AG04450 (cell line): ENCODE measurements at regions of chr18 and their contacts with region 1.

Region 1: GRCh38 chr18:45212181-45213039 is 402.9 kb upstream of the SLC14A2 start:
- DNase-seq: peak; percentile 44
- H3K4me3 ChIP-seq: no peak overlapping the region
- H3K27ac ChIP-seq: no peak overlapping the region
- H3K27me3 ChIP-seq: no peaks in the 10 kb centered on the region
- CTCF ChIP-seq: peak; percentile 99

Region 2: DNA sequence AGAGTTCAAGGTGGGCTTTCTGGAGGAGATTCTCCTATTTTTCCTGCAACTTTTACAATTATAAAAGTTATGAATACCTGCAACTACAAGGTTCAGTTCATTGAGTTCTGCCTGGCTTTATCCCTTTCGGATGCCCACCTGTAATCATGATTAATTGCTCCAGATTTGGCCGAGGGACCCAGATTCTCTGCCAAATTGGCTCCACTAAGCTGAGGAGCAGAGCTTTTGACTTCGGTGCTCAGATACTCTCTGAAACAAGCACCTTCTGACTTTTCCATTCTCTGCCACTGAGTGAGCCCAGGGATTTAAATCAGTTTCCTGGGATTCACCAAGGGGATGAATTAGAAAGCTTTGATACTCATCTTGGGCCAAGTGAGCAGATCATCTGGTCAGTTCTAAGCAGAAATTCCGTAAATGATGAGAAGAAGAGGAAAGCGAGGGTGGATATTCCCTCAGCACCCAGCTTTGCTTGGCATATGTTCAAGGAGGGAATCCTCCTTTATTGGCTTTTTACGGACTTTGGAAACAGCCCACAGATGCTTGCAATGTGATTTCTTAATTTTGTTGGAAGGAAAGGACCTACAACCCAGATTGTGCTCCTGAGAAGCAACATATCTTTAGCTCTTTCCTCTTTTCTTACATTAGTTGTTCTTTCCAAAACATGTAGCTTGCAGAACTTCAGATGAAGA is 352.5 kb before region 1 on chr18:
- CTCF ChIA-PET with region 1: no interaction called
- POLR2A ChIA-PET with region 1: no interaction called
- DNase-seq: no peak
- H3K4me3 ChIP-seq: no peak overlapping the region
- H3K27ac ChIP-seq: no peak overlapping the region
- H3K27me3 ChIP-seq: no peaks in the 10 kb centered on the region
- CTCF ChIP-seq: no peak

Region 3: DNA sequence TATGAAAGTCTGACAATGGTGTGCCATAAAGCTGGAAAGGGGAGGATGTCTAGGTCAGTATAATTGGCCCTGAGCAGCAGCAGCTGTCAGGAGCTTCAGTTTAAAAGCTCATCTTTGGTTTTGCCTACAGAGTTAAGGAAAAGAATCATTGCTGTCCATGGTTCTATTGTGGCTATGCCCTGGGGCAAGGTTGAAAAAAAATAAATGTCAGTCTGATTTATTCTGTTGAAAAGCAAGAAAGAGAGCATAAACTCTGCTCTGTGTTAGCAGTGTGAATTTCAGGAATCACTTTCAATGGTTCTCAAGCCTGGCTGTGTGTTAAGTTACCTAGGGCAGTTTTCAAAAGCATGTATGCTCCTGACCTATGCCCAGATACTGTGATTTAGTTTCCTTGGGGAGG is 85.0 kb before region 1 on chr18:
- CTCF ChIA-PET with region 1: interaction called, 10 read pairs
- POLR2A ChIA-PET with region 1: no interaction called
- DNase-seq: no peak
- H3K4me3 ChIP-seq: no peak overlapping the region
- H3K27ac ChIP-seq: no peak overlapping the region
- H3K27me3 ChIP-seq: no peaks in the 10 kb centered on the region
- CTCF ChIP-seq: no peak

Region 4: DNA sequence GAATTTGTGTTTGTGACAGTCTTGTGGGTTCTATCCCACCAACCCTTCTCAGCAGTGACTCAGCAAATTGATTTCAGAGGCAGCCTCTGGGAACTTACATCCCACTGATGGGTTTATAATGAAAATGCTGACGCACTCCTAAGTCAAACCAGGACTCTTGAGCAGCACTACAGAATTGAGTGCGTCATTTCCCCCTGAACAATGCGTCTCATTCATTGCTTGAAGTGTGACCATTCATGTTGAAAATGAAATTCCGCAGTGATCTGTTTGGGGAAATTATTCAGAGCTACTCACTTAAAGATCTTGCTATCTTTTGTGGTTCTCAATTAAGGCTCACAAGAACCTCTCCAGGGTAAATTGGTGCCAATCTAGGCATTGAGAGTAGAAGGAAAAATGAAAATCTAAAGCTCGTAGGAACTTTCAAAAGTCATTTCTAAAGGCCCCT is 14.9 kb before region 1 on chr18:
- CTCF ChIA-PET with region 1: interaction called, 26 read pairs
- POLR2A ChIA-PET with region 1: no interaction called
- DNase-seq: peak; percentile 34
- H3K4me3 ChIP-seq: no peak overlapping the region
- H3K27ac ChIP-seq: no peak overlapping the region
- H3K27me3 ChIP-seq: no peaks in the 10 kb centered on the region
- CTCF ChIP-seq: no peak

Region 5: DNA sequence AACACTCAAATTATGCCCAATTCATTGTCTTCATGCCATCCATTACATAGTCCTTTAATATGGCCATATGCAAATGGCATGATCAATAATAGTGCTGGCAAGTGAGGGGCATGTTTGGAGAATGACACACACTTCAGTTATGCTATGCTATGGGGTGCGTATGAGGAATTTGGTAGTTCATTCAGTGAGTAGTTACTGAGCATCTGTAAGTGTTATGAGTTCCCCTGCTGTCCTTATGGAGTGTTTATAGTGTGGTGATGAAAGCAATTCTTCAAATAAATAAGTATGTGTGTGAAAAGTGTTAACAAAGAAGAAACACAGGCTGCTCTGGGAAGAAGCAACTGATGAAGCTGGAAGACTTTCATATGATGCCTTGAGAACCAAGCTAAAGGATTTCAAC is 19.2 kb after region 1 on chr18:
- CTCF ChIA-PET with region 1: interaction called, 12 read pairs
- POLR2A ChIA-PET with region 1: no interaction called
- DNase-seq: no peak
- H3K4me3 ChIP-seq: no peak overlapping the region
- H3K27ac ChIP-seq: no peak overlapping the region
- H3K27me3 ChIP-seq: no peaks in the 10 kb centered on the region
- CTCF ChIP-seq: no peak

Region 6: GRCh38 chr18:45248240-45248903 is 36.0 kb after region 1 on chr18:
- CTCF ChIA-PET with region 1: interaction called, 13 read pairs
- POLR2A ChIA-PET with region 1: no interaction called
- DNase-seq: peak; percentile 43
- H3K4me3 ChIP-seq: no peak overlapping the region
- H3K27ac ChIP-seq: peak overlapping the region; percentile 85
- H3K27me3 ChIP-seq: no peaks in the 10 kb centered on the region
- CTCF ChIP-seq: no peak

Region 7: GRCh38 chr18:45402485-45403056 is 190.2 kb after region 1 on chr18:
- CTCF ChIA-PET with region 1: no interaction called
- POLR2A ChIA-PET with region 1: no interaction called
- DNase-seq: no peak
- H3K4me3 ChIP-seq: no peak overlapping the region
- H3K27ac ChIP-seq: no peak overlapping the region
- H3K27me3 ChIP-seq: no peaks in the 10 kb centered on the region
- CTCF ChIP-seq: no peak

Region 8: GRCh38 chr18:45449418-45450227 is 237.2 kb after region 1 on chr18:
- CTCF ChIA-PET with region 1: no interaction called
- POLR2A ChIA-PET with region 1: no interaction called
- DNase-seq: no peak
- H3K4me3 ChIP-seq: no peak overlapping the region
- H3K27ac ChIP-seq: no peak overlapping the region
- H3K27me3 ChIP-seq: no peaks in the 10 kb centered on the region
- CTCF ChIP-seq: no peak